Activated naive CD4-positive, alpha-beta T cell treated with anti-CD3 and anti-CD28 coated beads, Interleukin-2, amount 10 ng/mL, durations not matched to agents 7 days and 5 days (primary cell): ENCODE measurements at regions of chr12 and their contacts with region 1.

Region 1: GRCh38 chr12:76031537-76032073 is at the start of gene PHLDA1:
- DNase-seq: peak; percentile 91
- H3K4me3 Mint-ChIP-seq: peak within 1 kb of the TSS; percentile 84
- H3K27ac Mint-ChIP-seq: peak within 1 kb of the TSS; percentile 85
- H3K4me1 Mint-ChIP-seq: peaks cover 27% of the 10 kb centered on the region
- H3K27me3 Mint-ChIP-seq: peaks cover 38% of the 10 kb centered on the region

Region 2: GRCh38 chr12:75526655-75527511 is 504.7 kb before region 1 on chr12:
- CTCF ChIA-PET with region 1: interaction called, 81 read pairs
- DNase-seq: peak; percentile 38
- H3K4me3 Mint-ChIP-seq: no peak overlapping the region
- H3K27ac Mint-ChIP-seq: no peak overlapping the region
- H3K4me1 Mint-ChIP-seq: peaks cover 7% of the 10 kb centered on the region
- H3K27me3 Mint-ChIP-seq: peaks cover 22% of the 10 kb centered on the region

Region 3: GRCh38 chr12:75738486-75738885 is 293.1 kb before region 1 on chr12:
- CTCF ChIA-PET with region 1: no interaction called
- DNase-seq: no peak
- H3K4me3 Mint-ChIP-seq: no peak overlapping the region
- H3K27ac Mint-ChIP-seq: no peak overlapping the region
- H3K4me1 Mint-ChIP-seq: no peaks in the 10 kb centered on the region
- H3K27me3 Mint-ChIP-seq: peaks cover 13% of the 10 kb centered on the region

Region 4: DNA sequence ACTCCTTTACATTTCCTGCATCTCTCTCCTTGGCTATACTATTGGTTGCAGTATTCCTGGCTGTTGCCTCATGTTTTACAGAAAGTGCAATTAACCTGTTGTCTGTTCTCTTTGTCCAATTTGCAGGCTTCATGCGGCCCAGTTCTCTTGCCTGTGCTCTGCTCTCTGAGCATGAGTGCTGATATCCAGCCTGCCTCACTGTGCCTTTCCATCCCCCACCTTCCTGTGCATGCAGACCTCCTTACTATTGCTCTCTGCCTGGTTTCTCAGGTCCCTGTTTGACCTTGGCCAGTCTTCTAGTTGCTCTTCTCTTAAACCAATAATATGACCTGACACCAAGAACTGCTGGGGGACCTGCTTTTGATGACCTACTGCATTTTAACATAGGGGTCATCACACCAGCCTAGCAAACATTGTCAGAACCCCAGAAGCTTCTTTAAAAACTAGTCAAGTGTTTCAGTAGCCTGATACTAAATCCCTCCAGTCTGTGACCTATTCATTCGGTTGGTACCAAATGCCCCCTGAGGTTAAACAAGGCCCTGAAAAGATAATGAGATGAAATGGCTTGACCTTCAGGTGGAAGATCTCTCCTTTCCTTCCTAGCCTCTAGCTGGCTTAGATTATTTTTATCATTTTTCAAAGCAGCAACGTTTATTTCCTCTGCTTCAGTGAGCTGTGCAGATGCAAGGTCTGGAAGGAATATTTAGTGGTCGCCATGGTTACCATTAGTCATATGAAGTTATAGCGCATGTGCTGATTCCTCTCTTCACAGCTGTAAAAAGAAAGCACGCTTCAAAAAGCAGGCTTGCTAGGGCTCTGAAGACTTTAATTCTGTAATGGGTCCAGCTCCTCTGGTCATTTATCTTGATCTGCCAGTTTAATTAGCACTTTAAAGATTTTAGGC is 216.5 kb before region 1 on chr12:
- CTCF ChIA-PET with region 1: interaction called, 32 read pairs
- DNase-seq: no peak
- H3K4me3 Mint-ChIP-seq: no peak overlapping the region
- H3K27ac Mint-ChIP-seq: no peak overlapping the region
- H3K4me1 Mint-ChIP-seq: no peaks in the 10 kb centered on the region
- H3K27me3 Mint-ChIP-seq: peaks cover 5% of the 10 kb centered on the region

Region 5: GRCh38 chr12:75936515-75937440 is 94.8 kb before region 1 on chr12:
- CTCF ChIA-PET with region 1: interaction called, 13 read pairs
- DNase-seq: no peak
- H3K4me3 Mint-ChIP-seq: no peak overlapping the region
- H3K27ac Mint-ChIP-seq: no peak overlapping the region
- H3K4me1 Mint-ChIP-seq: peaks cover 19% of the 10 kb centered on the region
- H3K27me3 Mint-ChIP-seq: no peaks in the 10 kb centered on the region

Region 6: DNA sequence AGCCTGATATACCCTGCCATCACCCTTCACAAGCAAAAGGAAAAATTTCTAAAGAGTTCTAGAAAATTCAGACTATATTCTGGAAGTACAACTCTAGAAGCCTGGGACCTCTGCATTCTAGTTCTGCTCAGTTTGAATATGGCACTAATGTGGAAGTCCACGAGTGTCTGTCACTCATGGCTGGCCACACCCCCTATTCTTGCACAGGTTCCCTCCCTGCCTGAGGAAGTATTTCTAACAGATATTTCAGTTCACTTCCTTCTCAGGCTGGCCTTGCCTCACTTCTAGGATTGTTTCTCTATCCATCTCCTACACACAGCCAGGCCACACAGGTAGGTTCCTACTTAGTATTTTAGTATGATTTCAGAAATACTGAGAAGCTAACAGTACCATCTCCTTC is 67.5 kb before region 1 on chr12:
- CTCF ChIA-PET with region 1: no interaction called
- DNase-seq: no peak
- H3K4me3 Mint-ChIP-seq: no peak overlapping the region
- H3K27ac Mint-ChIP-seq: no peak overlapping the region
- H3K4me1 Mint-ChIP-seq: peaks cover 20% of the 10 kb centered on the region
- H3K27me3 Mint-ChIP-seq: peaks cover 11% of the 10 kb centered on the region

Region 7: GRCh38 chr12:75977952-75978671 is 53.5 kb before region 1 on chr12:
- CTCF ChIA-PET with region 1: interaction called, 12 read pairs
- DNase-seq: peak; percentile 79
- H3K4me3 Mint-ChIP-seq: peak overlapping the region; percentile 13
- H3K27ac Mint-ChIP-seq: peak overlapping the region; percentile 85
- H3K4me1 Mint-ChIP-seq: peaks cover 45% of the 10 kb centered on the region
- H3K27me3 Mint-ChIP-seq: peaks cover 1% of the 10 kb centered on the region

Region 8: GRCh38 chr12:76020731-76021672 is 10.6 kb before region 1 on chr12:
- CTCF ChIA-PET with region 1: interaction called, 30 read pairs
- DNase-seq: peak; percentile 71
- H3K4me3 Mint-ChIP-seq: peak overlapping the region; percentile 35
- H3K27ac Mint-ChIP-seq: peak overlapping the region; percentile 95
- H3K4me1 Mint-ChIP-seq: peaks cover 25% of the 10 kb centered on the region
- H3K27me3 Mint-ChIP-seq: no peaks in the 10 kb centered on the region